CD4-positive, alpha-beta T cell (primary cell): ENCODE measurements at regions of chr15 and their contacts with region 1.

Region 1: DNA sequence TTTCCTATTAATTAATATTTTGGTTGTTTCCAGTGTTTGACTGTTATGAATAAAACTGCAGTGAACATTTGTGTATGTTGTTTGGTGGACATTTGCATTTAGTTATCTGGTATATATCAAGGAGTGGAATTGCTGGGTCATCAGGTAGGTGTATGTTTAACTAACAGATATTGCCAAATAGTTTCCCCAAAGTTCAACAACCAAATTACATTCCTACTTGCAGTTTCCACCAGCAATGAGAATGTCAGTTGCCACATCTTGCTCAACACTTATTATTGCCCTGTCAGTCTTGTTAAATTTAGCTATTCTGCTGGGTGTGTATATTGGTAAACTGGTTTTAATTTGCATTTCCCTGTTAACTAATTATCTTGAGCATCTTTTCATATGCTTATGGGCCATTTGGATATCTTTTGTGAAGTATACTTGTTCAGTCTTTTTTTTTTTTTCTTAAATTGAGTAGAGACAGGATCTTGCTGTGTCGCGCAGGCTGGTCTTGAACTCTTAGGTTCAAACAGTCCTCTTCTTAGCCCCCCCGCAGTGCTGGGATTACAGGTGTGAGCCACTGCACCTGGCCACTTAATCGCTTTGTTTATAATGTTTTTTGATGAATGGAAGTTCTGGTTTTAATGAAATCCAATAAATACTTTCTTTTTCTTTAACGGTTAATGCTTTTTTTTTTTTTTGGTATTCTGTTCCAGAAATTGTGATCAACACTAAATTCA is 7.9 kb downstream of the FEM1B start:
- DNase-seq: no peak
- ATAC-seq: no peak
- H3K4me3 ChIP-seq: no peak overlapping the region
- H3K4me3 Mint-ChIP-seq: peak overlapping the region; percentile 11
- H3K27ac ChIP-seq: no peak overlapping the region
- H3K27ac Mint-ChIP-seq: peak overlapping the region; percentile 5
- H3K4me1 ChIP-seq: peaks cover 24% of the 10 kb centered on the region
- H3K4me1 Mint-ChIP-seq: peaks cover 79% of the 10 kb centered on the region
- H3K27me3 ChIP-seq: no peaks in the 10 kb centered on the region
- H3K27me3 Mint-ChIP-seq: no peaks in the 10 kb centered on the region
- CTCF ChIP-seq: no peak

Region 2: DNA sequence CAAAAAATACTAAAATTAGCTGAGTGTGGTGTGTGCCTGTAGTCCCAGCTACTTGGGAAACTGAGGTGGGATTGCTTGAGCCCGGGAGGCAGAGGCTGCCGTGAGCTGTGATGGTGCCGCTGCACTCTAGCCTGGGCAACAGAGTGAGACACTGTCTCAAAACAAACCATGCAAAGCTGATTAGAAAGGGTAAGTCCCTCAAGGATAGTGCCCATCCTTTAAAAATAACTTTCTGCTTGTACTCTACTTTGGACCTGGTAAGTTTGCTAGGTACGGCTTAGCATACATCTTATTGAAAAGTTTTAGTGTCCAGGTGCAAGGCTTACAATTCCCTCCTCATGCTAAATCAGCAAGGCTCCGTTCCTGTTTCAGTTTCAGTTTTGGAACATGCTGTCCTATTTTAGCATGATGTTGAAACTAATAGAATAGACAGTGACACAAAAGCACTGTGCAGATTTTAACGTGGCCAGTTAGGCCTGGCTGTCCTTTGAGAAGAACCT is 13.5 kb after region 1 on chr15:
- CTCF ChIA-PET with region 1: interaction called, 3 read pairs
- POLR2A ChIA-PET with region 1: interaction called, 11 read pairs
- intact Hi-C with region 1: loop called in 1 of 2 experiments (anchors 2 kb)
- DNase-seq: peak in 4 of 14 experiments; percentile 14 to 67 (median 59)
- ATAC-seq: peak; percentile 82
- H3K4me3 ChIP-seq: peak overlapping the region; percentile 53
- H3K4me3 Mint-ChIP-seq: peak overlapping the region; percentile 80
- H3K27ac ChIP-seq: peak overlapping the region in 1 of 2 donors; percentile 45
- H3K27ac Mint-ChIP-seq: peak overlapping the region; percentile 88
- H3K4me1 ChIP-seq: peaks cover 13% of the 10 kb centered on the region
- H3K4me1 Mint-ChIP-seq: peaks cover 57% of the 10 kb centered on the region
- H3K27me3 ChIP-seq: no peaks in the 10 kb centered on the region
- H3K27me3 Mint-ChIP-seq: no peaks in the 10 kb centered on the region
- CTCF ChIP-seq: no peak

Region 3: DNA sequence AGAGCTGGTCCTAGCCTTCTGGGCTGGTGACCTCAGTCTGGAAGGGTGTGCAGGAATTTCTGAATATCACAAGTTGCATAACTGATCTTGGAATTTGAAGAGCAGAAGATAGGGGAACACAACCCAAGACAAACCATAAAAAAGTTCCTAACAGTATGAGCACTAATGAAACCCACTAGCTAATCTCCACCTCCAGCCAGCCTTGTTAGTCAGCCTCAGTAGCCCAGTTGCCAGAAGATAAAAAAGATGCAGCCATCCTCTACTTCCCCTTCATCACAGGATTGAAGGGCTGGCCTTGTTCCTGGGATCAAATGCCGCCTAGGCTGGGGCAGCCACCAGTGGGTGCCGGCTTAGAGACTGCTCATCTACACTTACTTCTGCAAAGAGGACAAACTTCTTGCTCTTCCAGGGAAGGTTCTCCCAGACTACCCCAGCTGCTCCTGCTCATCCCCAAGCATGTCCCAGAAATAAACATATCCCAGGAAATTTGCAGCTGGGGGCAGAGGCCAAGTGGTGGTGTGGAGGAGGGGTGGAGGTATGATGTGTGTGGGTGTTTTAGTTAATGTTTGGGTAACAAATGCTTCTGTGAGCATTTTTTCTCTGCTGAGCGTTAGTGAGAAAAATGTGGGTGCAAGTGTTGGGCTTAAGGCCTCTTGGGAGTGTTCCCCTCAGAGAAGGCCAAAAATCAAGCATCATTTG is 155.8 kb after region 1 on chr15:
- CTCF ChIA-PET with region 1: no interaction called
- POLR2A ChIA-PET with region 1: no interaction called
- intact Hi-C with region 1: no loop called
- DNase-seq: no peak
- ATAC-seq: no peak
- H3K4me3 ChIP-seq: no peak overlapping the region
- H3K4me3 Mint-ChIP-seq: no peak overlapping the region
- H3K27ac ChIP-seq: no peak overlapping the region
- H3K27ac Mint-ChIP-seq: no peak overlapping the region
- H3K4me1 ChIP-seq: no peaks in the 10 kb centered on the region
- H3K4me1 Mint-ChIP-seq: no peaks in the 10 kb centered on the region
- H3K27me3 ChIP-seq: peaks cover 3 to 23% of the 10 kb centered on the region in 2 experiments
- H3K27me3 Mint-ChIP-seq: peaks cover 66% of the 10 kb centered on the region
- CTCF ChIP-seq: no peak

Region 4: GRCh38 chr15:68517285-68517761 is 231.9 kb after region 1 on chr15:
- CTCF ChIA-PET with region 1: no interaction called
- POLR2A ChIA-PET with region 1: no interaction called
- intact Hi-C with region 1: no loop called
- DNase-seq: no peak
- ATAC-seq: no peak
- H3K4me3 ChIP-seq: no peak overlapping the region
- H3K4me3 Mint-ChIP-seq: no peak overlapping the region
- H3K27ac ChIP-seq: no peak overlapping the region
- H3K27ac Mint-ChIP-seq: no peak overlapping the region
- H3K4me1 ChIP-seq: no peaks in the 10 kb centered on the region
- H3K4me1 Mint-ChIP-seq: no peaks in the 10 kb centered on the region
- H3K27me3 ChIP-seq: no peaks in the 10 kb centered on the region
- H3K27me3 Mint-ChIP-seq: no peaks in the 10 kb centered on the region
- CTCF ChIP-seq: no peak